ENCODE measurements at regions of chr11 and their contacts with region 1.

Region 1: GRCh38 chr11:72030472-72031045 is 31.9 kb downstream of the IL18BP start:
- DNase-seq: no peak
- H3K4me3 ChIP-seq: no peak overlapping the region
- H3K27ac ChIP-seq: peak overlapping the region in 1 of 2 donors; percentile 30
- H3K4me1 ChIP-seq: peaks cover 8 to 40% of the 10 kb centered on the region in 2 donors
- H3K27me3 ChIP-seq: no peaks in the 10 kb centered on the region
- CTCF ChIP-seq: no peak

Region 2: DNA sequence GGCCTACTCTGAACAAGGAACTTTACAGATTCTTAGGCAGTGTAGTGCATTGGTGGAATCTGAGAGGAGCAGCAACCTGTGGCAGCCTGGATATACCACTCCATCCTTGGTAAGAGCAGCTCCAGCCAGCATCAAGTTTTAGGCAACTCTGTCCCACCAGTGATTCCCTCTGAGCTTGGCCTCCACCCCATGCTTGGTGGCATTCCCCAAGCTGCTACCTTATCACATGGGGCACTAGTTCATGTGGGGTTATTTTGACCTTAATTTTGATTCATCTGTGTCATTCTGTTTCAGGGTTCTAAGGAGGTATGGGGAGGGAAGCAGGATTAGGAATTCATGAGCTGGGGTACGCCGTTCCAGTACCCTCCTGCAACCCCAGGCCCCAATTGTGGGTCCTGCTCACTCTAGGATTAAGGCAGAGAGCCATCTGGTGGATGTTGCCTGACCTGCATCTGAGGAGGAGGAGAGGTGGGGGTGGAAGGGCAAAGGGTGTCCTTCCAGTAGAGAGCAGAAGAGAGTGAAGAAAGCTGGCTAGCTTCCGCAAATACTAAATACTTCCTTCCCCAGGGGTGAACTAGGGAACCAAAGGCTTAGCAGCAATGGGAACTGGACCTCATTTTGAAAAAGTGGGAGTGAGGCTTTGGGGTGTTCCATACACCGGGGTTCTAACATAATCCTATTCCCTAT is 60.6 kb after region 1 on chr11:
- intact Hi-C with region 1: loop called (anchors 1 kb)
- DNase-seq: peak; percentile 49 to 81
- H3K4me3 ChIP-seq: no peak overlapping the region
- H3K27ac ChIP-seq: no peak overlapping the region
- H3K4me1 ChIP-seq: peaks cover 0 to 6% of the 10 kb centered on the region in 2 donors
- H3K27me3 ChIP-seq: no peaks in the 10 kb centered on the region
- CTCF ChIP-seq: peak; percentile 77 to 89 (median 87)

Region 3: GRCh38 chr11:72144807-72145560 is 114.4 kb after region 1 on chr11:
- intact Hi-C with region 1: loop called (anchors 1 kb)
- DNase-seq: no peak
- H3K4me3 ChIP-seq: no peak overlapping the region
- H3K27ac ChIP-seq: no peak overlapping the region
- H3K4me1 ChIP-seq: no peaks in the 10 kb centered on the region
- H3K27me3 ChIP-seq: no peaks in the 10 kb centered on the region
- CTCF ChIP-seq: no peak

Measured in ascending aorta (tissue), 2 donors.